Activated B cell treated with CpG ODN at 0.5 μM for 24 hours (primary cell): ENCODE measurements at regions of chr4 and their contacts with region 1.

Region 1: GRCh38 chr4:40897557-40898203 is 147.9 kb downstream of the NSUN7 start:
- DNase-seq: peak; percentile 54
- ATAC-seq: peak; percentile 67
- H3K4me3 Mint-ChIP-seq: peak overlapping the region; percentile 69
- H3K27ac Mint-ChIP-seq: no peak overlapping the region
- H3K4me1 Mint-ChIP-seq: peaks cover 8% of the 10 kb centered on the region
- H3K27me3 Mint-ChIP-seq: peaks cover 2% of the 10 kb centered on the region
- CTCF ChIP-seq: peak; percentile 37

Region 2: DNA sequence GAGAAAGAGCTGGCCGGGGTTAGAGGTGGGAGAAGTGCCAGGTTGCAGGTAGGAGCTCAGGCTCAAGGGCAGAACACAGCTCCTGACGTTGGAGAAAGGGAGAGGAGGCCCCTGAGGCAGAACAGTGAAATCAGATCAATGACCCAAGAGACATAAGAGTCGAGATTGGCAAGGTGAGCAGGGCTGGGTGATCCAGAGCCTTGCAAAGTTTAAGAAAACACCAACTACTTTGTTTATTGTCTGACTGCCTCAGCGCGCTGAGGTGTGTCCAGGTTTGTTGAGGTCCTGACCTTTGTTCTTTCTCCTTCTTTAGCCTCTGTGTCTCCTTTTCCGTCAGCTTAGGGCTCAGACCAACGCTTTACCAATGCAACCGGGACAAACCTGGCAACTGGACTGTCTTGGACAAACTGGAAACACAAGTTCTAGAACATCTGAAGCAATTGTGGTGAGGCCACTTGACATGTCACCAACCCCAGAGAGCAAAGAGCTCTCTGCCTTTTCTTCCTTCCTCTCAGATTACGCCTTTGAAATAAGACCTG is 534.2 kb before region 1 on chr4:
- CTCF ChIA-PET with region 1: no interaction called
- POLR2A ChIA-PET with region 1: no interaction called
- intact Hi-C with region 1: no loop called
- DNase-seq: no peak
- ATAC-seq: no peak
- H3K4me3 Mint-ChIP-seq: no peak overlapping the region
- H3K27ac Mint-ChIP-seq: no peak overlapping the region
- H3K4me1 Mint-ChIP-seq: peaks cover 7% of the 10 kb centered on the region
- H3K27me3 Mint-ChIP-seq: no peaks in the 10 kb centered on the region
- CTCF ChIP-seq: no peak

Region 3: DNA sequence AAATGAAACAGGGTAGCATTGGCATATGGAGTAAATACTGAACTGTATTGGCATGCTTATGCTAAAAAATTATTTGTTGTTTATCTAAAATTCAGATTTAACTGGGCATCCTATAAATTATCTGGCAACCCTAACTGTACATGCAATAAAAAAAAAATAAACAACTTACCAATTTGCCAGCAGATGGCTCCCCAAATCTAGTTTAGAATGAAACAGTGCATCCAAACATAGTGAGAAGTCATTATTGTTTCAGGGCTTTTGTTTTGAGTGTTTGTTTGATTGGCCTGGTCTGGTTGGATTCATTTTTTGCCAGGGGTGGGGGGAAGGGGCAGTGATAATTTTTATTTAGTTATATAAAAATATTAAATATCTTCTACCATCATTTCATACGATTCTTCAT is 160.8 kb before region 1 on chr4:
- CTCF ChIA-PET with region 1: interaction called, 15 read pairs
- POLR2A ChIA-PET with region 1: no interaction called
- intact Hi-C with region 1: loop called (anchors 1 kb)
- DNase-seq: no peak
- ATAC-seq: no peak
- H3K4me3 Mint-ChIP-seq: no peak overlapping the region
- H3K27ac Mint-ChIP-seq: no peak overlapping the region
- H3K4me1 Mint-ChIP-seq: peaks cover 2% of the 10 kb centered on the region
- H3K27me3 Mint-ChIP-seq: peaks cover 2% of the 10 kb centered on the region
- CTCF ChIP-seq: no peak